ENCODE measurements at regions of chr19 and their contacts with region 1.

Region 1: GRCh38 chr19:14006243-14006765 is at the start of gene RFX1:
- DNase-seq: peak; percentile 100
- H3K4me3 ChIP-seq: peak within 1 kb of the TSS; percentile 63 to 73 (median 69)
- H3K27ac ChIP-seq: peak within 1 kb of the TSS; percentile 91
- H3K4me1 ChIP-seq: peaks cover 20% of the 10 kb centered on the region
- H3K27me3 ChIP-seq: no peaks in the 10 kb centered on the region
- CTCF ChIP-seq: no peak
- POLR2A ChIP-seq: no peak
- total RNA-seq, gene RFX1: 14.4 and 14.7 TPM in 2 replicates

Region 2: GRCh38 chr19:13748169-13748828 is 258.0 kb before region 1 on chr19:
- CTCF ChIA-PET with region 1: no interaction called
- POLR2A ChIA-PET with region 1: no interaction called
- dilution Hi-C with region 1: no loop called
- intact Hi-C with region 1: loop called (anchors 5 kb)
- DNase-seq: peak; percentile 42
- H3K4me3 ChIP-seq: peak overlapping the region; percentile 85 to 93 (median 85)
- H3K27ac ChIP-seq: peak overlapping the region; percentile 82
- H3K4me1 ChIP-seq: peaks cover 13% of the 10 kb centered on the region
- H3K27me3 ChIP-seq: no peaks in the 10 kb centered on the region
- CTCF ChIP-seq: no peak
- POLR2A ChIP-seq: peak; percentile 61

Region 3: GRCh38 chr19:13959962-13960862 is 46.1 kb before region 1 on chr19:
- CTCF ChIA-PET with region 1: no interaction called
- POLR2A ChIA-PET with region 1: interaction called, 13 read pairs
- dilution Hi-C with region 1: no loop called
- intact Hi-C with region 1: loop called (anchors 1 kb)
- DNase-seq: no peak
- H3K4me3 ChIP-seq: no peak overlapping the region
- H3K27ac ChIP-seq: no peak overlapping the region
- H3K4me1 ChIP-seq: no peaks in the 10 kb centered on the region
- H3K27me3 ChIP-seq: no peaks in the 10 kb centered on the region
- CTCF ChIP-seq: peak; percentile 19 to 44
- POLR2A ChIP-seq: no peak

Region 4: DNA sequence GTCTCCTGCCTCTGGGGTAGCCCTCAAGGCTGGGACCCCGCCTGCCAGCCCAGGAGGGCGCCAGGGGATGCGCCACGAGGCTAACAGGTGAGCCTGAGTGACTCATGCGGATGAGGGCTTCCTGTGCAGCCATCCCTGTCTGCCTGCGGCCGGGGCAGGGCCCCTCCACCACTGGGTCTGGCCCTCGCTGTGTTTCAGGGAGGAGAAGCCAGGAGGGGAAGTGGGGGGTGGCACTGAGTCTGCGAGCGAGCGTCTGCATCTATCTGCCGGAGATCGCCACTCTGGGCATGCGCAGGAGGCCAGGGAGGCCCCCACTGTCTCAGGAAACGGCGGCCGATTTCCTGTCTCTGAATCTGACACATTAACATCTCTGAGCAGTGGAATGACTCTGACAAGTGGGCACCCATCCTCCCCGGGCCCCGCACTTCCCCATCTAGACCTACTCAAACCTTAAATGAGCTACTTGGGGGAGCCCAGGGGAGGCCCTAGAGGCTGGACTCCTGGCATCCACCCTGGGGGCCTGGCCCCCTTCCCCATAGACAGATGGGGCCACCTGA is 19.9 kb before region 1 on chr19:
- CTCF ChIA-PET with region 1: interaction called, 8 read pairs
- POLR2A ChIA-PET with region 1: no interaction called
- dilution Hi-C with region 1: no loop called
- intact Hi-C with region 1: loop called (anchors 1 kb)
- DNase-seq: peak; percentile 90
- H3K4me3 ChIP-seq: peak overlapping the region in 1 of 3 experiments; percentile 15
- H3K27ac ChIP-seq: peak overlapping the region; percentile 84
- H3K4me1 ChIP-seq: peaks cover 22% of the 10 kb centered on the region
- H3K27me3 ChIP-seq: no peaks in the 10 kb centered on the region
- CTCF ChIP-seq: no peak
- POLR2A ChIP-seq: peak; percentile 58

Region 5: GRCh38 chr19:14073261-14073924 is 67.1 kb after region 1 on chr19:
- CTCF ChIA-PET with region 1: no interaction called
- POLR2A ChIA-PET with region 1: no interaction called
- dilution Hi-C with region 1: no loop called
- intact Hi-C with region 1: loop called (anchors 1 kb)
- DNase-seq: peak; percentile 59
- H3K4me3 ChIP-seq: peak overlapping the region; percentile 29 to 61 (median 43)
- H3K27ac ChIP-seq: no peak overlapping the region
- H3K4me1 ChIP-seq: peaks cover 26% of the 10 kb centered on the region
- H3K27me3 ChIP-seq: no peaks in the 10 kb centered on the region
- CTCF ChIP-seq: peak; percentile 35 to 60
- POLR2A ChIP-seq: no peak